ENCODE measurements at regions of chr2 and their contacts with region 1.

Region 1: DNA sequence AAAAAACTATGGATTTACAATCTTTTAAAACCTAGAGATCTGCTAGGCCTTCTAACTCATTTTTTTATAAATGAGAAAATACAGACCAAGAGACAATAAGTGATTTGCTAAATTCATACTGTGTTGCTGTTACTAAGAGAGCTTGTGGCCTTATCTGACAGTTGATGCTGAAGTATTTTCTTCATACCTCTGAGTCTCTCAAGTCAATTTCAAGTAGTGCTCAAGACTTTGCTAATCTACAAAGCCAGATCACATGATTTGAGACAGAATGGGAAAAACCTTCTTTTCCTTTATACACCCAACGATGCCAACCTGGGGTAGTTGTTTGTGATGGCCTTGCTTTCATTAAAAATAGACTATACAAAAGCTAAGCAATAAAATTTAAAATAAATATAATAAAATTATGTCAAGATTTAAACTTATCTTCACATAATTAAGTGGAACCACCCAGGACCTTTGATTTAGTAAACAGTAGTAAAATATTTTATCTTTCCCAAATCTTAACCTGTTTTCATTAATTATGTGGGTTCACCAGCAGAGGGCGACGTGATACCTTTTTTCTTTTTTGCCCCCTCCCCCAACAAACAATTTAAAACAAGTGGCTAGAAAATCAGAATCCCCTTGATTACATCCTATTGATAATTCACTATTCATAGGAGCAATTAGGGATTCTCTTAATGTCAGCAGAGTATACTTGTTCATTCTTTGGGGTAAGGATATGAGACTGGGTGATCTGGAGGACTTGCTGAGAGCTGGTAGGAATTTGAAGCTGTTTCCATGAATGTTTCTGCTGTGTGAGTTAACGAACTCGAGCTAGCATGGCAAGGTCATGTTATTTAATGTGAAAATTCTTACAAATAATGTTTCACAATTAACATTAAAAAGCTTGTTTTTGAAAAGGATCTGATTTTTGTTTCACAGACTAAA is 49.6 kb upstream of the SLC5A7 start:
- DNase-seq: peak; percentile 21
- ATAC-seq: no peak
- H3K4me3 Mint-ChIP-seq: no peak overlapping the region
- H3K27ac Mint-ChIP-seq: 0 out of 2 replicates have a peak overlapping the region, but pooled peaks have one; percentile 6
- H3K4me1 Mint-ChIP-seq: peaks cover 10% of the 10 kb centered on the region
- H3K27me3 Mint-ChIP-seq: no peaks in the 10 kb centered on the region
- CTCF ChIP-seq: peak; percentile 55; the same call in 1 of the 2 replicates

Region 2: GRCh38 chr2:107961395-107961794 is 24.7 kb after region 1 on chr2:
- CTCF ChIA-PET with region 1: no interaction called
- POLR2A ChIA-PET with region 1: no interaction called
- DNase-seq: no peak
- ATAC-seq: no peak
- H3K4me3 Mint-ChIP-seq: no peak overlapping the region
- H3K27ac Mint-ChIP-seq: no peak overlapping the region
- H3K4me1 Mint-ChIP-seq: 0 out of 2 replicates have a peak, but pooled peaks cover 2% of the 10 kb centered on the region
- H3K27me3 Mint-ChIP-seq: no peaks in the 10 kb centered on the region
- CTCF ChIP-seq: no peak

Region 3: GRCh38 chr2:108145557-108146326 is 209.0 kb after region 1 on chr2:
- CTCF ChIA-PET with region 1: no interaction called
- POLR2A ChIA-PET with region 1: no interaction called
- DNase-seq: no peak
- ATAC-seq: no peak
- H3K4me3 Mint-ChIP-seq: no peak overlapping the region
- H3K27ac Mint-ChIP-seq: no peak overlapping the region
- H3K4me1 Mint-ChIP-seq: no peaks in the 10 kb centered on the region
- H3K27me3 Mint-ChIP-seq: no peaks in the 10 kb centered on the region
- CTCF ChIP-seq: no peak

Region 4: GRCh38 chr2:108169982-108170625 is 233.4 kb after region 1 on chr2:
- CTCF ChIA-PET with region 1: interaction called, 14 read pairs
- POLR2A ChIA-PET with region 1: no interaction called
- DNase-seq: no peak
- ATAC-seq: peak; percentile 84
- H3K4me3 Mint-ChIP-seq: no peak overlapping the region
- H3K27ac Mint-ChIP-seq: no peak overlapping the region
- H3K4me1 Mint-ChIP-seq: no peaks in the 10 kb centered on the region
- H3K27me3 Mint-ChIP-seq: no peaks in the 10 kb centered on the region
- CTCF ChIP-seq: 0 out of 2 replicates have a peak, but pooled peaks have one; percentile 15